PC-3 (cell line): ENCODE measurements at regions of chr7 and their contacts with region 1.

Region 1: GRCh38 chr7:55964261-55965099 is at the start of gene NIPSNAP2:
- DNase-seq: peak; percentile 71
- ATAC-seq: peak; percentile 63
- H3K4me3 ChIP-seq: peak within 1 kb of the TSS; percentile 84
- H3K27ac ChIP-seq: peak within 1 kb of the TSS; percentile 73
- H3K4me1 ChIP-seq: peaks cover 15% of the 10 kb centered on the region
- H3K27me3 ChIP-seq: no peaks in the 10 kb centered on the region
- CTCF ChIP-seq: peak; percentile 32; the same call in 1 of the 2 replicates
- total RNA-seq, gene NIPSNAP2: 63.9 and 65.8 TPM in 2 replicates

Region 2: GRCh38 chr7:55975988-55976633 is 11.6 kb after region 1 on chr7:
- CTCF ChIA-PET with region 1: interaction called, 3 read pairs
- POLR2A ChIA-PET with region 1: interaction called, 4 read pairs
- intact Hi-C with region 1: loop called (anchors 1 kb)
- DNase-seq: no peak
- ATAC-seq: peak; percentile 25
- H3K4me3 ChIP-seq: no peak overlapping the region
- H3K27ac ChIP-seq: no peak overlapping the region
- H3K4me1 ChIP-seq: peaks cover 9% of the 10 kb centered on the region; the same call in 1 of the 2 replicates
- H3K27me3 ChIP-seq: no peaks in the 10 kb centered on the region
- CTCF ChIP-seq: no peak

Region 3: DNA sequence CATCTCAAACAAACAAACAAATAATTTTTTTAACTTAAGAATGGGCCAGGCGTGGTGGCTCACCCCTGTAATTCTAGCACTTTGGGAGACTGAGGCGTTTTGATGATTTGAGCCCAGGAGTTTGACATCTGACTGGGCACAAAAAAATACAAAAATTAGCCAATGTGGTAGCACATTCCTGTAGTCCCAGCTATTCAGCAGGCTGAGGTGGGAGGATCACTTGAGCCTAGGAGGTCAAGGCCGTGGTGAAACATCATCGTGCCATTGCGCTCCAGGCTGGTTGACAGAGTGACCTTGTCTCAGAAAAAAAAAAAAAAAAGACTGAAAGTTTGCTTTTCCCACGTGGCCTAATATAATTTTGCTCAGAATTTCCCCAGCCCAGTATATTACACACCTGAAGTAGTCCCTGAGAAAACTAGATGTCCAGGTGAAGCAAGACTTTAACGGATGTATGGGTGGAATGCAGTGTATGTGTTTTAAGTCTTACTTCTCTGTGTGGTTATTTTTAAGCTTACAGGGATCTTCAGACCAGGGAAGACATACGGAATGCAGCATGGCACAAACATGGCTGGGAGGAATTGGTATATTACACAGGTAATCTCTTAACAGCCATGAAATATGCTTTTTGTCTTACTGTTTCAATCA is 32.5 kb after region 1 on chr7:
- CTCF ChIA-PET with region 1: no interaction called
- POLR2A ChIA-PET with region 1: interaction called, 10 read pairs
- intact Hi-C with region 1: no loop called
- DNase-seq: no peak
- ATAC-seq: no peak
- H3K4me3 ChIP-seq: no peak overlapping the region
- H3K27ac ChIP-seq: no peak overlapping the region
- H3K4me1 ChIP-seq: no peaks in the 10 kb centered on the region
- H3K27me3 ChIP-seq: no peaks in the 10 kb centered on the region
- CTCF ChIP-seq: no peak